ENCODE measurements at regions of chr22 and their contacts with region 1.

Region 1: DNA sequence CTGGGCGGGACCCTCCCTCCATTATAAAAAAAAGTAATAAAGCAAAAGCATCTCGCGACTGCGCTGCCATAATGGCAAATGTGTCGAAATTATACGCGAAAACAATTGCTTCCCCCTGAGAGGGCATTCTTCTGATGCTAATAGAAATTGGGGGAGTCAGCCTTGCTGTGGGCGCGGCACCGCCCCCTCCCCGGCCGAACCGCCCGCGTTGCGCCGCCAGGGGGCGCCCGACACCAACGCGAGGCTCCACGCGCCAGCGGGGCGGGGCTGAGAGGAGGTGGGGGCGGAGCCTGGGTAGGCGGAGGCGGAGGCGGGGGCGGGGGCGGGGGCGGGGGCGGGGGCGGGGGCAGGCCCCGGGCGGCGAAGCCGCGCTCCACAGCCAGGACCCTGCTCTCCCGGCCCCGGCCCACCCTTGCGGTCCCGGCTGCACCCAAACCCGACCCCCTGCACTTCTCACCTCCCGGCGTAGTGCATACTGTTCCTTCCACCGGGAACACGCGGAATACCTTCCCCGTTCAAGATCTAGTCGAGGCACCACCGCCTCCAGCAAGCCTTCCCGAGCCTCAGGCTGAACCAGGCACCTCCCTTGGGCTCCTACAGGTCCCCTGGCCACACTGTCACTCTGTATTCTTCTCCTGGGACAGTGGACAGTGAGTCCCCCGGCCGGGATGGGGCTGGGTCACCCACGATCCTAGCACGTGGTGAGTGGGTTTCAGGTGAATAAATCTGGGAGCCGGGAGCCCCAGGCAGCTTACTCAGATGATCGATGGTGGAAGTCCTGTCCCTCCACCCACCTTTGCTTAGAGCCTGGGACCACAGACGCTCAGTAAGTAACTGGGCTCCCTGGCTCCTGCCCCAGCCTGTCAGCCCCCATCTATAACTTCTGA is 15.5 kb upstream of the UPK3A start:
- DNase-seq: peak; percentile 64 to 97 (median 82)

Region 2: GRCh38 chr22:45036154-45036553 is 233.0 kb before region 1 on chr22:
- intact Hi-C with region 1: no loop called
- DNase-seq: peak in 9 of 10 donors; percentile 18 to 86 (median 42)

Region 3: DNA sequence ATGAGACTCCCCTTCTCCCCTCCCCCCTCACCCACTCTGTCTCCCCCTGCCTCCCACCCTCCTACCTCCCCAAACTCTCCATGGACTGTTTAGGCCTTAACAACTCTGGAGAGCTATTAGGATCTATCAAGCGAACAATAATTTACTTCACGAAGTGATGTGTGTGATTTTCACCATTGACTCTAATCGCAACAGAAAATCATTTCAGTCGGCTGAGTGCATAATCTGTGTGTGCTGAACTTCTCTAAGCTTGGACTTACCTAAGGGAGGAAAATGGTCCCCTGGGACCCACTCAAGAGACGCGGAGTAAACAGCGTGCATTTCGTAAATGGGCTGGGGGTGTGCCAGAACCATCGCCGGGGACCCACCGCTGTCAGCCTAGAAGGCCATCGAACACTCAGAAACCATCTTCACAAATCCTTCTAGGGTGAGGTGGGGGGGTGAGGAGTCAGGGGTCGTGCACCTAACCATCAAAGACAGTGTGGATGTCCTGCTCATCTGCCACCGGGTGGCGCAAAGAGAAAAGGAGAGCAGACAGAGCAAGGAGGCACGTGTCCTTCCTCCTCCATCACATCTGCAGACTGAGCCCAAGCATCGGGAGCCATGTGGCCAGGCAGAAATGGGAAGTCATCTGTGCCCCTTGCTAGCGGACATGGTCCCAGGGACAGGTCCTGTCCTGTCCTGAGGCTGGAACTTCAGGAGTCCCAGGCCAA is 167.5 kb before region 1 on chr22:
- intact Hi-C with region 1: loop called (anchors 10 kb)
- DNase-seq: peak in 9 of 10 donors; percentile 20 to 88 (median 35)

Region 4: DNA sequence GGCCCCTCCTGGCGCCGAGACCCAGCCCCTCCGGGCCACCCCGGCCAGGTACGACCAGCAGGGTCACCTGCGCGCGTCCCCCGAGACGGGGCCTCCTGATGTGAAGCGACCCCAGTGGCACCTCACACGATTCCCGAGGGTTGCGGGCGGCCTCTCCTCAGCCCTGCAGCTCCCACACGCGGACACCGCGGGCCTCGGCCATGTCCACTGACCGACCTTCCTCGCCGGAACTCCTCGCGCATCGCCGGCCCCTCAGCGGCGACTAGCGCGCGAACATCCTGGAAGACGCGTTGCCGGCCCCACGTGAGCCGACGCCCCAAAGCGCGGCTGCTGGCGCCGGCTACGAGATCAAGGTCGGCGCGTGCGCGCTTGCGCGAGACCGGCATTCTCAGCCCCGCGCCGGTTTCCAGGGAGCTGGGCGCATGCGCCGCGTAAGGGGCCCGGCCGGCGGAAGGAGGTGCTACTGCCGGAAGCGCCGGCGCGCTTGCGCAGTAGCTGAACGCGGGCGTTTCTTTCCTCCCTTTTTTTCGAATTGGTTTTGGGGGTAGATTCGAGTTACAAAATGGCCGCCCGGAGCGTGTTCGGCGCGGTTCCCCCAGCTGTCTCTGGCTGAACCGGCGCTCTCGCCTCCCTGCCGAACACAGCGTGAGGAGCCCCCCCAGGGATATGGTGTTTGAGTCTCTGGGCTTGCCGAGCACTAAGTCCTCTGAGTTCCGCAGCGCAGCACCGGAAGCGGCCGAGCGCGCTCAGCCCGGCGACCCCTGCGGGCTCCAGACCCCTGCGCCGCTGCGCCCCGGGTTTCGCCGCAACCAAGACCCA is 105.5 kb before region 1 on chr22 and contains the start of gene NUP50:
- intact Hi-C with region 1: loop called (anchors 10 kb)
- DNase-seq: peak; percentile 84 to 98 (median 90)

Region 5: GRCh38 chr22:45309472-45310227 is 40.4 kb after region 1 on chr22 and contains the start of gene FAM118A:
- intact Hi-C with region 1: loop called (anchors 5 kb)
- DNase-seq: peak; percentile 93 to 100 (median 97)

Region 6: GRCh38 chr22:45320357-45320976 is 51.3 kb after region 1 on chr22:
- intact Hi-C with region 1: no loop called
- DNase-seq: peak in 3 of 10 donors; percentile 16 to 54 (median 29)

Region 7: DNA sequence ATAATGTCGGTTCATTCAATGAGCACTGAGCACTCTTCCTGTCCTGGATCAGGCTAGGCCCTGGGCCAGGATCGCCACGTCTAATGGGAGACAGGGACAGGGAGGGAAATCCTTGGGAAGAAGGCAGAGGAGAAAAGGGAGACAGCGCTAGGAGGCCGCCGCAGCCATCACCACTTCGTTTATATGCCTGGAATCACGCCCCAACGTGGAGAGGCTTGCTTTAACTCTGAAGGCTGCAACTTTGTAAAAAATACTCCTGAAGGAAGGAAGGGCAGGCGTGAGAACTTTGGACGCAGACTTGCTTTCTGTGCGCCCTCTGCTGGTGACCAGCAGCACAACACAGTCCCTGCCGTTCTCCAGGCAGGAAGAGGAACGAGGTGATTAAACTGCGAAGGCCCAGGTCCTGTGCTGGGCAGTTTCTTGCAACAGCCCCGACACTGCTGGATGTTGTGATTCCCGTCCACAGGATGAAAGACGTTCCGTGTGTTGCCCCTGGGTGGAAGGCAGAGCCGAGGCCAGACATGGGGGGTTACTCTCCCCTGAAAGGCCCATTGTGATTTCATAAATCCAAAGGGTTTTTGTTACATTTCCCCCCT is 166.4 kb after region 1 on chr22:
- intact Hi-C with region 1: loop called (anchors 1 kb)
- DNase-seq: peak; percentile 64 to 97 (median 85)

Region 8: GRCh38 chr22:45553351-45554039 is 284.3 kb after region 1 on chr22:
- intact Hi-C with region 1: loop called (anchors 1 kb)
- DNase-seq: peak; percentile 67 to 97 (median 82)

Measured in posterior cingulate gyrus (tissue), 11 donors.